HepG2 (cell line): ENCODE measurements at regions of chr13 and their contacts with region 1.

Region 1: GRCh38 chr13:51632591-51633362 is 48.5 kb downstream of the WDFY2 start:
- DNase-seq: peak; percentile 77
- ATAC-seq: peak; percentile 72
- H3K4me3 ChIP-seq: peak overlapping the region in 1 of 3 experiments; percentile 34; a peak in 2 of 6 replicates
- H3K27ac ChIP-seq: peak overlapping the region; percentile 62
- H3K4me1 ChIP-seq: peaks cover 72% of the 10 kb centered on the region
- H3K27me3 ChIP-seq: no peaks in the 10 kb centered on the region
- CTCF ChIP-seq: no peak
- EP300 ChIP-seq: no peak
- POLR2A ChIP-seq: no peak
- RAD21 ChIP-seq: 0 out of 2 replicates have a peak, but pooled peaks have one; percentile 39

Region 2: GRCh38 chr13:51619614-51620013 is 13.2 kb before region 1 on chr13:
- CTCF ChIA-PET with region 1: no interaction called
- POLR2A ChIA-PET with region 1: no interaction called
- in situ Hi-C with region 1: no loop called
- intact Hi-C with region 1: loop called (anchors 2 kb)
- DNase-seq: no peak
- ATAC-seq: no peak
- H3K4me3 ChIP-seq: no peak overlapping the region
- H3K27ac ChIP-seq: peak overlapping the region; percentile 77
- H3K4me1 ChIP-seq: peaks cover 67% of the 10 kb centered on the region
- H3K27me3 ChIP-seq: no peaks in the 10 kb centered on the region
- CTCF ChIP-seq: no peak
- EP300 ChIP-seq: no peak
- POLR2A ChIP-seq: no peak
- RAD21 ChIP-seq: no peak

Region 3: DNA sequence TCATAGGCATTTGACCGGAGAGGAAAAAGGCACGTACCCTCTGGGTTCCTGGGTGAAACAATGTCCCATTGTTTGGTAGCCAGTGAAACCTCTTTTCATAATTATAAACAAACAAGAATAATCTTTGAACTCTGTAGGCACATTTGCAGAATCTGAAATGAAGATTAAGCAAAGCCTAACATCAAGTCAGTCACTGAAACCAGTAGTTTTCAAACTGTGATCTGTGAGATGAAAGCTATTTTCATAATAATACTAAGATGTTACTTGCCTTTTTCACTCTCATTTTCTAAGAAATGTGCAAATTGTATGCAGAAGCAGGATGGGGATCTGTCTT is 56.9 kb after region 1 on chr13:
- CTCF ChIA-PET with region 1: no interaction called
- POLR2A ChIA-PET with region 1: no interaction called
- in situ Hi-C with region 1: no loop called
- intact Hi-C with region 1: loop called (anchors 2 kb)
- DNase-seq: peak; percentile 94
- ATAC-seq: peak; percentile 98
- H3K4me3 ChIP-seq: peak overlapping the region in 2 of 3 experiments; percentile 27 to 44; a peak in 2 of 6 replicates
- H3K27ac ChIP-seq: peak overlapping the region; percentile 83
- H3K4me1 ChIP-seq: peaks cover 40% of the 10 kb centered on the region
- H3K27me3 ChIP-seq: no peaks in the 10 kb centered on the region
- CTCF ChIP-seq: no peak
- EP300 ChIP-seq: peak in 1 of 2 experiments; percentile 81; a peak in 3 of 4 replicates
- POLR2A ChIP-seq: no peak
- RAD21 ChIP-seq: no peak